Activated naive CD4-positive, alpha-beta T cell treated with anti-CD3 and anti-CD28 coated beads for 36 hours (primary cell): ENCODE measurements at regions of chr2 and their contacts with region 1.

Region 1: GRCh38 chr2:61144697-61145268 is 17.2 kb upstream of the C2orf74 start:
- DNase-seq: peak; percentile 97
- H3K4me3 Mint-ChIP-seq: peak overlapping the region; percentile 92
- H3K27ac Mint-ChIP-seq: peak overlapping the region; percentile 85
- H3K4me1 Mint-ChIP-seq: peaks cover 6% of the 10 kb centered on the region
- H3K27me3 Mint-ChIP-seq: no peaks in the 10 kb centered on the region

Region 2: GRCh38 chr2:60756191-60757041 is 388.4 kb before region 1 on chr2 and contains the start of gene PAPOLG:
- CTCF ChIA-PET with region 1: no interaction called
- intact Hi-C with region 1: loop called (anchors 1 kb)
- DNase-seq: peak; percentile 99
- H3K4me3 Mint-ChIP-seq: peak within 1 kb of the TSS; percentile 99
- H3K27ac Mint-ChIP-seq: peak within 1 kb of the TSS; percentile 97
- H3K4me1 Mint-ChIP-seq: peaks cover 40% of the 10 kb centered on the region
- H3K27me3 Mint-ChIP-seq: no peaks in the 10 kb centered on the region
- total RNA-seq, gene PAPOLG: 14.1 to 16.1 TPM

Region 3: DNA sequence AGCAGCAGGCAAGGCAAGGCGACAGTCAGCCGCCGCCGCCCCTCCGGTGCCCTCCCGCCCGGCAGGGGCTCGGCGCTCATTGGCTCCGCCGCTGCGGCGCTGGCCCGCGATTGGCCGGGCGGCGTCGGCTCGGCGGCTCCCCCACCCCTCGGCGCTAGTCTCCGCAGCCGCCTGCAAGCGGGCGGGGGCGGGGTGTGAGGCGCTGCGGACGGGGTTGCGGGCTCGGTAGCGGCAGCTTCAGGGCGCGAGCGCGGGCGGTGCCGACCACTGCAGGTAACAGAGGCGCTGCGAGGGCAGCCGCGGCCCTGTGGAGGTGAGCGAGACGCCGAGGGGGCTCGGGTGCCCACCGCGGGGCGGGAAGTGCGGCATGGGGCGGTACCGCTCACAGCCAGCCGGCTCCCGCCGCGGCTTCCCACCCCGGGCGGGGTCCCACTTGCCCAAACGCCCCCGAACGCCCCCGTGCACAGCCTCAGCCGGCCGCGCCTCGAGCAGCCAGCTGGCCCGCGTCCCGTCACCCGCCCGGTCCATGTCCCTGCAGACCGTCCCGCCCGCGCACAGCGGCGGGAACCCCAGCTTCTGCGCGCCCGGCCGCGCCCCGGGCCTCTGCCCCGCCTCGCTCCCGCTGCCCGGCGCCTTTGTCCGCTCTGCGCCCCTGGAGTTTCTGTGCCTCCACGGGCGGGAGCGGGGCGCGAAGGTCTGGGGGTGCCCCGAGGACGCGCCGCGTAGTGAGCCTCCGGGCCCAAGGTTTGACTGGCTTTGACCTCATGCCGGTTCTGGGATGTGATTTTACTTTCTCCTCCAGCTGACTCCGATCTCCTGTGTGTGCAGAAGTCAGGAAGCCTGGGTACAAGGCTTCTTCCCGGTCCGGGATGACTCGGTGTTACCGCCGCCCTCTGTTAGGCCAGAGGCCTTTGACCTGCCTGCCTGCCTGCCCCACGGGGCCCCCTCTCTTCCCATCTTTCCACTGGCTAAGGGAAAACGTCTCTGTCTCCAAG is 78.8 kb before region 1 on chr2 and contains the start of gene SANBR:
- CTCF ChIA-PET with region 1: no interaction called
- intact Hi-C with region 1: loop called (anchors 1 kb)
- DNase-seq: peak; percentile 83
- H3K4me3 Mint-ChIP-seq: peak within 1 kb of the TSS; percentile 84
- H3K27ac Mint-ChIP-seq: no peak within 1 kb of the TSS
- H3K4me1 Mint-ChIP-seq: peaks cover 8% of the 10 kb centered on the region
- H3K27me3 Mint-ChIP-seq: no peaks in the 10 kb centered on the region
- total RNA-seq, gene SANBR: 1.9 to 2.1 TPM

Region 4: DNA sequence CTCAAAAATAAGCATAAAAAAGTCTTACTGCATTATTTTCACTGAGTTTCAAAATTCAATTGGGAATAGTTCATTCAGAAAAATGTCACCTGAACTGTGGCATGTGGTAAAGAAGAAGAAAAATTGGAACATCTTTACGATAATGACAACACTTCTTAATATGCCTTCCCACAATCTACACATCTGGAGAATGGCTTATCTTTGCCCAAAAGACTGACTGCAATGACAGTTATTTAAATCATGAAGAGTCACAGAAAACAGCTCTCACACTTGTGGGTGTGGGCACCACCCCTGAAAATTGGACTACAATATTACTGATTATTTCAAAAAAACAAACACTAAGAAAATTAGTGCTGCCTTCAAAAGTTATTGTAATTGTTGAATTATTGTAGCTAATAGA is 173.8 kb after region 1 on chr2:
- CTCF ChIA-PET with region 1: no interaction called
- intact Hi-C with region 1: no loop called
- DNase-seq: no peak
- H3K4me3 Mint-ChIP-seq: no peak overlapping the region
- H3K27ac Mint-ChIP-seq: no peak overlapping the region
- H3K4me1 Mint-ChIP-seq: peaks cover 4% of the 10 kb centered on the region
- H3K27me3 Mint-ChIP-seq: no peaks in the 10 kb centered on the region

Region 5: DNA sequence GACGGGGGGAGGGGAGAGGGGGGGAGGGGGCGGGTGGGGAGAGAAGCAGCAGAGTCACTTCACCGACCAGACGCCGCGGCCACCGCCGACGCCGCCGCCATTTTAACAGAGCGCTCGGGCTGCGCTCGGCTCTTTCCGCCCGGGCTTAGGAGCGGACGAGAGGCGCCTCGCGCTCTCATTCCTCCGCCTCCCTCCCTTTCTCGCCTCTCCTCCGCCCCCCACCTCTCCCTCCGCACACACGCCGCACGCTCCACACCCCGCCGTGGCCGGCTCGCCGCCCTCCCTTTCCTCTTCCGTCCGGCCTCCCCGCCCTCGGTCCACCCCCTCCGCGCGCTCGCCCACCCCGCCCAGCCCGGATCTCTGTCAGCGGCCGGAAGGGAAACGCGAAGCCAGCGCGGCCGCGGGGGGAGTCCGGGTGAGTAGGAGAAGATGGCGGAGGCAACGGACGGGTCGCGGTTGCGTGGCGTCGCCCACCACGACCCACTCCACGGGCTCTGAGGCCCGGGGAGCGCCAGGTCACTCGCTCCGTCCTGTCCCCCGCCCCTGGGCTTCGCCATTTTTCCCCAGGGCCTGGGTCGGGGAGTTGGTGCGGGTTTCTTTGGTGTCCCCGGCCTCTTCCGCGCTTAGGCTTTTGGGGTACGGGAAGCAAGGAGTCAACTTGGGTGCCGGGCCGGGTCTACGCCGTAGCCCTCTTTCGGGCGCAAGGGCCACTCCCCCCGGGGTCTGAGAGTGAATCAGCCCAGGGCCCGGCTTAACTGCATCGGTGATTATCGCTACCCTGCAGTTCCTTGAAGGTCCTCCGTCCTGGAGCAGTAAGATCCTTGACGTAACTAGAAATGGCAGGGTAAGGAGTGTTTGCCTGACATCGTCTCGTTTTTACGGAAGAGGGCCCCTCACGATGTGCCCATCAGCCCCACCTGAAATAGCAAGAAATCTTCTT is 326.5 kb after region 1 on chr2 and contains the start of gene USP34:
- CTCF ChIA-PET with region 1: no interaction called
- intact Hi-C with region 1: loop called (anchors 2 kb)
- DNase-seq: peak; percentile 94
- H3K4me3 Mint-ChIP-seq: peak within 1 kb of the TSS; percentile 98
- H3K27ac Mint-ChIP-seq: peak within 1 kb of the TSS; percentile 97
- H3K4me1 Mint-ChIP-seq: peaks cover 31% of the 10 kb centered on the region
- H3K27me3 Mint-ChIP-seq: no peaks in the 10 kb centered on the region
- total RNA-seq, gene USP34: 59.5 to 60.4 TPM